ENCODE measurements at regions of chrX and their contacts with region 1.

Region 1: DNA sequence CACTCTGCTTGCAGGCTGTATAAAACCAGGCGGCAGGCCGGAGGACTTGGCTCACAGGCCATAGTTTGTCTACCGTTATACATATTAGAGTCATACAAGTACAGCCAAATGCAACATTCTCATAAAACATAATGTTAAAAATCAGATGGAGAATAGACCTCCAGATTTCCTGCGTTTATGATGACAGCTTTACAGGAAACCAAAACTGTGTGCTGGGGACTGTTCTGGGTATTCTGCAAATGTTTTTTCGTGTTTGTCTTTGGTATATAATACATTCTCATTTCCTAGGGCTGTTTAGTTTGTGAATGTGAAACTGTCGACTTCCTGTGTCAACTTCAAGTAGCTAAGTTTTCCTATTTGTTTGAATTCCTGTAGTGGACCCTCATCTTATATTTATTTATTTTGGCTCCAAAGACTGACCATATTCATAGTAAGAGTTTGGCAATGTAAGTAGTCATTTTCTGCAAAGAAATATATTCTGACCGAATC is 79.5 kb upstream of the FAM9C start:
- DNase-seq: no peak

Region 2: DNA sequence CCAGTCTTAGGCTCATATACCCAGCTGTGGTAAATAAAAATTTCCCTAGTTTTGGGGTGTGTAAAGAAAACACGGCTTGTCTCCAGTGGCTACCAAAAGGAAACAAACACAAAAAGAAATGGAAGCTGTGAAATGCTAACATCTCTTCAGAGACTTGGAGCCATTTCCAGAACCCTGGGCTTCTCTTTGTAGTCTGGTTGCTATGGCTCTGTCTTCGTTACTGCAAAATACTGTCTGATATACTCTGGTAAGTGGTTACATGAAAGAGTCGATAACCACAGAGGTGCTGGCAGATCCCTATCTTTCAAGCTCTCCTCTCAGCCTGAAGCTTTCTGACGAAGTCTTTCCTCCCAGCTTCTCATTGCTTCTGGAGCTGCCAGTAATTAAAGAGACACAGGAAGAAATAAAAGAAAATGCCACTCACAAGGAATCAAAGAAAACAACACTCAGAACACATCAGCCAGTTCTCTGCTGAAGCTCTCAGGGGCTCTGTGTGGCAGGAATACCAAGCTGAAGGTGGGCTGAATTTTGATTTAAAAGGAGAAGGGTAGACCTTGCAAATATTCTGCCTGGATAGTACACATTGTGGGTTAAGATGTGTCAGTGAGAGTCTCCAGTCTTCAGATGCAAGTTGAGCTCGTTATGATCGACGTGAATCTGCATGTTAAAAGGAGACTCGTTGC is 28.1 kb after region 1 on chrX:
- intact Hi-C with region 1: no loop called
- DNase-seq: no peak

Region 3: GRCh38 chrX:13376857-13377549 is 253.1 kb after region 1 on chrX:
- intact Hi-C with region 1: loop called in 1 of 2 experiments (anchors 10 kb)
- DNase-seq: no peak

Measured in posterior vena cava (tissue), 2 donors.